Activated naive CD4-positive, alpha-beta T cell treated with anti-CD3 and anti-CD28 coated beads for 36 hours (primary cell): ENCODE measurements at regions of chrX and their contacts with region 1.

Region 1: GRCh38 chrX:81174286-81174685 is 27.4 kb downstream of the HMGN5 start:
- DNase-seq: no peak
- H3K4me3 Mint-ChIP-seq: no peak overlapping the region
- H3K27ac Mint-ChIP-seq: no peak overlapping the region
- H3K4me1 Mint-ChIP-seq: no peaks in the 10 kb centered on the region
- H3K27me3 Mint-ChIP-seq: no peaks in the 10 kb centered on the region

Region 2: GRCh38 chrX:81195712-81196111 is 21.4 kb after region 1 on chrX:
- CTCF ChIA-PET with region 1: interaction called, 4 read pairs
- intact Hi-C with region 1: loop called (anchors 1 kb)
- DNase-seq: peak; percentile 71
- H3K4me3 Mint-ChIP-seq: no peak overlapping the region
- H3K27ac Mint-ChIP-seq: no peak overlapping the region
- H3K4me1 Mint-ChIP-seq: peaks cover 16% of the 10 kb centered on the region
- H3K27me3 Mint-ChIP-seq: no peaks in the 10 kb centered on the region

Region 3: DNA sequence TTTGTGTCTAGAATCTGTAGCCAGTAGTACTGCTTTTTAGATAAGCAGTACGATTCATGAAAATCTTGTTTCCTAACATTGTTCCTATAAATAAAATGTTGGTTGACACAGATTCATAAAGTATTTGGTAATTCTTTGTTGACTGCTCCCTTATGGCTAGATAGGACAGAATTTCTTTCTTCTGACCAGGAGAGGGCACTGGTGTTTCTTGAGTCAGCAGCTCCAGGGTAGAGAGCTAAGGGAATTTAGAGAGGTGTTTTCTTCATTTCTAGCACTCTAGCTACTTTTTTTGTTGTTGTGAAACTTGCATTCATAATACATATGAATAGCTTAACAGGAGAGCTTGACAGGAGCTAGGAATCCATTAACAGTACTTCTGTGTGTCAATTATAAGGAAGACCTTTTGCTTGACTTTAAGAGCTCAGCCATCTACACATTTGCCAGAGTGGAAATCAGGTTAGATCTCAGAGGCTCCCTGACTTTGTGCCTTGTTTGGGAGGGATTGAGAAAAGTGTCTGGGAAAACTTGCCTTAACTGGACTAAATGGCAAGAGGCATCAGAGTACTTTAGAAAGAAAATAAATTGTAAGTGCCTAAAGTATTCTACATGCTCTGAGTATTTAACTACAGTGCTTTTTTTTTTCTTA is 783.7 kb after region 1 on chrX:
- CTCF ChIA-PET with region 1: no interaction called
- intact Hi-C with region 1: loop called (anchors 10 kb)
- DNase-seq: peak; percentile 8
- H3K4me3 Mint-ChIP-seq: no peak overlapping the region
- H3K27ac Mint-ChIP-seq: no peak overlapping the region
- H3K4me1 Mint-ChIP-seq: no peaks in the 10 kb centered on the region
- H3K27me3 Mint-ChIP-seq: no peaks in the 10 kb centered on the region